HepG2 (cell line): ENCODE measurements at regions of chr20 and their contacts with region 1.

Region 1: DNA sequence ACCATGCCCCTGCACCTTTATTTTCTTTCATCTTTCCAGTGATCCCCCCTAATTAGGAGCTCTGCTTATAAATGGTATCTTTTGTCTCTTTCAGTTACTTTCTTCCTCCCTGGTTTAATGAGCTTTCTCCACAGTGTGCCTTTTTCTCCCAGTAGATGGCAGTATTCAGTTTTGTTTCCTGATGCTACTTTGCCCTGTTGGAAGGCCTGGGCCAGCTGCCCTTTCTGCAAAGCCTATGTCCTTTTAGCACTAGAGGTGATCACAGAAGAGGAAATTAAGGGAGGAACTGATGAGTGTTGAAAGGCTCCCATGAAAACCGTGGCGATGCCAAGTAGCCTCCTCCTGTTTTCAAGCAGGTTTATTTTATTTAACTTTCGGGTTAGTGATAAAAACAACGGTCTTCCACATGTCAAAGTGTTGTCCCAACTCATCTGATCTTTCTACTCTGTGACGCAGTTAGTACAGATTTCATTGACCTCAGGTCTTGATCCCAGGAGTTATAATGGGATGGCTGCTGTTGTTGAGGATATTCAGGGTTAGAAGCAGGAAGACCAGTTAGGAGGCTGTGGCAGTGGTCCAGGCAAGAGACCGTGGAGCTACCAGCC is 184.2 kb upstream of the BMP2 start:
- DNase-seq: peak; percentile 61
- ATAC-seq: peak; percentile 97
- H3K4me3 ChIP-seq: no peak overlapping the region
- H3K27ac ChIP-seq: no peak overlapping the region
- H3K4me1 ChIP-seq: no peaks in the 10 kb centered on the region
- H3K27me3 ChIP-seq: no peaks in the 10 kb centered on the region
- CTCF ChIP-seq: peak; percentile 89
- EP300 ChIP-seq: no peak
- POLR2A ChIP-seq: no peak
- RAD21 ChIP-seq: no peak; the same call in 1 of the 2 replicates

Region 2: GRCh38 chr20:6253396-6253795 is 329.8 kb before region 1 on chr20:
- CTCF ChIA-PET with region 1: no interaction called
- POLR2A ChIA-PET with region 1: no interaction called
- in situ Hi-C with region 1: no loop called
- intact Hi-C with region 1: no loop called
- DNase-seq: no peak
- ATAC-seq: no peak
- H3K4me3 ChIP-seq: no peak overlapping the region
- H3K27ac ChIP-seq: no peak overlapping the region
- H3K4me1 ChIP-seq: no peaks in the 10 kb centered on the region
- H3K27me3 ChIP-seq: no peaks in the 10 kb centered on the region
- CTCF ChIP-seq: no peak
- EP300 ChIP-seq: no peak
- POLR2A ChIP-seq: no peak
- RAD21 ChIP-seq: no peak

Region 3: DNA sequence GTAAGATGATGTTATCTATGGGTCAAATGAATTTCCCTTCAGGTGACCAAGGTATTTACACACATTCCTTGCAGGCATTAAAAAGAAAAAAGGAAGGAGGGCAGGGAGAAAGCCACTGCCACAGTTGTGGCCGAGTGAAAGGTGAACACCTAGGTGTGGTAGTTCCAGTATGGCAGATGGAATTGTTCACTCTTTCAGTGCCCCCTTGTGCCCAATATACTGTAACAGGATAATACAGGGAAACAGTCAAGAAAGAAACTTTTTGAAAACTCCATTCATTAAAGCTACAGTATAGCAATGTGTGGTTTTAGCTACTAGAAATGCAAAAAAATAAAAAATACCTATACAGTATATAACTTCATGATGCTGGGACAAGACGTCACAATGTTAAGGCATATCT is 236.4 kb after region 1 on chr20:
- CTCF ChIA-PET with region 1: interaction called, 4 read pairs
- POLR2A ChIA-PET with region 1: no interaction called
- in situ Hi-C with region 1: no loop called
- intact Hi-C with region 1: loop called (anchors 1 kb)
- DNase-seq: peak; percentile 15
- ATAC-seq: peak; percentile 81
- H3K4me3 ChIP-seq: no peak overlapping the region
- H3K27ac ChIP-seq: no peak overlapping the region
- H3K4me1 ChIP-seq: no peaks in the 10 kb centered on the region
- H3K27me3 ChIP-seq: no peaks in the 10 kb centered on the region
- CTCF ChIP-seq: peak; percentile 46
- EP300 ChIP-seq: no peak
- POLR2A ChIP-seq: no peak
- RAD21 ChIP-seq: no peak